ENCODE measurements at regions of chr2 and their contacts with region 1.

Region 1: GRCh38 chr2:137467246-137467862 is 496.9 kb upstream of the HNMT start:
- DNase-seq: peak; percentile 57 to 65
- H3K4me3 ChIP-seq: no peak overlapping the region
- H3K4me3 Mint-ChIP-seq: no peak overlapping the region
- H3K27ac Mint-ChIP-seq: no peak overlapping the region
- H3K4me1 ChIP-seq: peaks cover 9% of the 10 kb centered on the region; the same call in 1 of the 2 replicates
- H3K4me1 Mint-ChIP-seq: no peaks in the 10 kb centered on the region
- H3K27me3 ChIP-seq: no peaks in the 10 kb centered on the region
- H3K27me3 Mint-ChIP-seq: no peaks in the 10 kb centered on the region
- CTCF ChIP-seq: peak; percentile 73 to 84

Region 2: GRCh38 chr2:137420744-137421143 is 46.6 kb before region 1 on chr2:
- CTCF ChIA-PET with region 1: no interaction called
- POLR2A ChIA-PET with region 1: no interaction called
- intact Hi-C with region 1: no loop called
- DNase-seq: no peak
- H3K4me3 ChIP-seq: no peak overlapping the region
- H3K4me3 Mint-ChIP-seq: no peak overlapping the region
- H3K27ac Mint-ChIP-seq: peak overlapping the region; percentile 45
- H3K4me1 ChIP-seq: no peaks in the 10 kb centered on the region; the same call in 1 of the 2 replicates
- H3K4me1 Mint-ChIP-seq: peaks cover 17% of the 10 kb centered on the region
- H3K27me3 ChIP-seq: no peaks in the 10 kb centered on the region
- H3K27me3 Mint-ChIP-seq: no peaks in the 10 kb centered on the region
- CTCF ChIP-seq: no peak

Region 3: GRCh38 chr2:137535897-137536296 is 68.5 kb after region 1 on chr2:
- CTCF ChIA-PET with region 1: no interaction called
- POLR2A ChIA-PET with region 1: no interaction called
- intact Hi-C with region 1: loop called (anchors 2 kb)
- DNase-seq: no peak
- H3K4me3 ChIP-seq: no peak overlapping the region
- H3K4me3 Mint-ChIP-seq: no peak overlapping the region
- H3K27ac Mint-ChIP-seq: no peak overlapping the region
- H3K4me1 ChIP-seq: no peaks in the 10 kb centered on the region
- H3K4me1 Mint-ChIP-seq: no peaks in the 10 kb centered on the region
- H3K27me3 ChIP-seq: no peaks in the 10 kb centered on the region
- H3K27me3 Mint-ChIP-seq: no peaks in the 10 kb centered on the region
- CTCF ChIP-seq: no peak

Region 4: DNA sequence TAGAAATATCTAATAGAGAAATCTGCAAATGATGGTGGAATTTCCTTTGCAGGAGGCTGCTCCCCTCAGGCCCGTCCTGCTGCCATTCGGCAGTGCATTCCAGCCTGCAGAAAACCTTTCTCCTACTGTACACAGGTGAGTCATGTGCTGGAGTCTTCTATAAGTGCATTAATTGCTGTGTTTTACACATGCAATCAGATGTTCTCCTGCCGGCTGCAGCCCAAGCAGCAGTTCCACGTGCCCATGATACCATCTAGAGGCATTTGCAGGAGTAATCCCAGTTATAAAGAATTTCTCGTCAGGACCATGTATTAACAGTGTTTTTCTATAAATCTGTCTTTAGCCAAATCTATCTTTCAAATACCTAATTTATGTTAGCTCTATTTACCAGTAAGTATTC is 192.3 kb after region 1 on chr2:
- CTCF ChIA-PET with region 1: no interaction called
- POLR2A ChIA-PET with region 1: no interaction called
- intact Hi-C with region 1: loop called (anchors 1 kb)
- DNase-seq: peak; percentile 17 to 42
- H3K4me3 ChIP-seq: no peak overlapping the region
- H3K4me3 Mint-ChIP-seq: no peak overlapping the region
- H3K27ac Mint-ChIP-seq: no peak overlapping the region
- H3K4me1 ChIP-seq: no peaks in the 10 kb centered on the region
- H3K4me1 Mint-ChIP-seq: no peaks in the 10 kb centered on the region
- H3K27me3 ChIP-seq: no peaks in the 10 kb centered on the region
- H3K27me3 Mint-ChIP-seq: no peaks in the 10 kb centered on the region
- CTCF ChIP-seq: peak in 1 of 2 experiments; percentile 32

Region 5: GRCh38 chr2:137677463-137677862 is 210.1 kb after region 1 on chr2:
- CTCF ChIA-PET with region 1: no interaction called
- POLR2A ChIA-PET with region 1: no interaction called
- intact Hi-C with region 1: loop called (anchors 2 kb)
- DNase-seq: no peak
- H3K4me3 ChIP-seq: no peak overlapping the region
- H3K4me3 Mint-ChIP-seq: no peak overlapping the region
- H3K27ac Mint-ChIP-seq: no peak overlapping the region
- H3K4me1 ChIP-seq: 0 out of 2 replicates have a peak, but pooled peaks cover 7% of the 10 kb centered on the region
- H3K4me1 Mint-ChIP-seq: peaks cover 13% of the 10 kb centered on the region
- H3K27me3 ChIP-seq: no peaks in the 10 kb centered on the region
- H3K27me3 Mint-ChIP-seq: no peaks in the 10 kb centered on the region
- CTCF ChIP-seq: peak in 1 of 2 experiments; percentile 20